ENCODE measurements at regions of chr3 and their contacts with region 1.

Region 1: GRCh38 chr3:46923559-46924350 is 46.2 kb downstream of the PTH1R start:
- DNase-seq: peak in 4 of 5 donors; percentile 13 to 60 (median 34)
- H3K4me3 ChIP-seq: no peak overlapping the region
- H3K4me3 Mint-ChIP-seq: no peak overlapping the region
- H3K27ac ChIP-seq: no peak overlapping the region
- H3K27ac Mint-ChIP-seq: peak overlapping the region in 6 of 8 donors; percentile 17 to 86 (median 60)
- H3K4me1 ChIP-seq: peaks cover 36% of the 10 kb centered on the region
- H3K4me1 Mint-ChIP-seq: peaks cover 33 to 48% (median 36%) of the 10 kb centered on the region in 3 donors
- H3K27me3 ChIP-seq: no peaks in the 10 kb centered on the region
- H3K27me3 Mint-ChIP-seq: no peaks in the 10 kb centered on the region

Region 2: DNA sequence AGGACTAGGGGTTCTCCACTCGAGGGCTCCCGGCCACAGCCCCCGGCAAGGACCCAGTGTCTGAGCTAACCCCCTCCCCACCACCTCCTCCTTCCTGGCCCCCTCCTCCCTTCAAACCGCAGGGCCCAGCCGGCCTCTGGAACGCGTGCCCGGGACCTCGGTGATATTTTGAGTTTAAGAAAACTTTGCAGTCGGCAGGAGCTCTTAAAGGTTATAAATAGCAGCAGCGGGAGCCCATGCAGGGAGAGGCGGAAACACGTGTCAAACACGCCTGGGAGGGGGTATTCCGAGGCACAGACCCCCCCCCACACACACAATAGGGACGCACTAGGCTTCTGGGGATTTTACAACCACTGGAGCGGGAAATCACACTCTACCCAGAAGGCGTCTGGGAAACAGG is 49.3 kb before region 1 on chr3:
- CTCF ChIA-PET with region 1: no interaction called
- POLR2A ChIA-PET with region 1: no interaction called
- DNase-seq: no peak
- H3K4me3 ChIP-seq: no peak overlapping the region
- H3K4me3 Mint-ChIP-seq: no peak overlapping the region
- H3K27ac ChIP-seq: no peak overlapping the region
- H3K27ac Mint-ChIP-seq: no peak overlapping the region
- H3K4me1 ChIP-seq: no peaks in the 10 kb centered on the region
- H3K4me1 Mint-ChIP-seq: no peaks in the 10 kb centered on the region
- H3K27me3 ChIP-seq: no peaks in the 10 kb centered on the region
- H3K27me3 Mint-ChIP-seq: peaks cover 6 to 28% of the 10 kb centered on the region in 2 donors

Region 3: DNA sequence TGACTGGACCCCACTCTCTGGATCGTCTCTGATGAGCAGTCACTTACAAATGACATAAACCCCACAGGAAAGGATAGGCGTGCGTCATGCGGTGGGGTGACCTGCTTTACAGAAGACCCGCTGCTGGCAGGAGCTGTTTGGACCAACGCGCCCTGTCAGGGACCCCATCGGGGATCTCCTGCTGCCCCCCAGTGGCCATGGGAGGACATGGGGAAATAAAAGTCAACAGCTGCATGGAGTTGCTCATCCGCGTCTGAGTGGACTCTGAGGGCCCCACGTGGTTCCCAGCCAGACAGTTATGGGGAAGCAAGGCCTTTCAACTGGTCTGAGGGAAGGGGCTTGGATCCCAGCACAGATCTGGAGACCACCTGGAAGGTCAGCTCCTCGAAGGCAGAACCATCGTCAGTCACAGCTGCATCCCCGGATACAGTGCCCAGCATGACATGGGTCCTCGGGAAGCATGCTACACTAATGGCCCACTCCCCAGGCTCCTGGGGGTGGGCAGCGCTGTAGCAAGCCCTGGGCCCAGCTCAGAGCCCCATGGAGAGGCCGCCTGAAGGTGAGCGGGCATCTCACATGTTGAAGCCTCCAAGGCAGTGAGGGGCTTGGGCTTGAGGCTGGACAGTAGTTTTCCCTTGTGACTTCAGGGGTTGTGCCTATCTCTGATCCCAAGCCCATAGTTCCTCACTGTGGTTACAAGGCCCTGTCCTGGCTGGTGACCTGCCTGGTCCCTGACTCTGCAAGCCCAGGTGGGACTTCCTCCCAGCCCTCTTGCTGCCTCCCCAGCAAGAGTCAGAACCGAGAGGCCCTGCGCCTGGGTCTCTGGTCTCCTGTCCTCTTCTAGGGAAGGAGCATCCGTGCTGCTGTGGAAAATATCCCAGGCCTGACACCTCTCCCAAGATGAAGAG is 14.0 kb before region 1 on chr3:
- CTCF ChIA-PET with region 1: interaction called, 17 read pairs
- POLR2A ChIA-PET with region 1: no interaction called
- DNase-seq: peak; percentile 64 to 82 (median 68)
- H3K4me3 ChIP-seq: no peak overlapping the region
- H3K4me3 Mint-ChIP-seq: peak overlapping the region in 4 of 7 donors; percentile 21 to 71 (median 30)
- H3K27ac ChIP-seq: no peak overlapping the region
- H3K27ac Mint-ChIP-seq: peak overlapping the region in 4 of 8 donors; percentile 57 to 93 (median 74)
- H3K4me1 ChIP-seq: peaks cover 6% of the 10 kb centered on the region
- H3K4me1 Mint-ChIP-seq: peaks cover 19 to 21% (median 20%) of the 10 kb centered on the region in 3 donors
- H3K27me3 ChIP-seq: no peaks in the 10 kb centered on the region
- H3K27me3 Mint-ChIP-seq: peaks cover 0 to 2% of the 10 kb centered on the region in 2 donors

Region 4: DNA sequence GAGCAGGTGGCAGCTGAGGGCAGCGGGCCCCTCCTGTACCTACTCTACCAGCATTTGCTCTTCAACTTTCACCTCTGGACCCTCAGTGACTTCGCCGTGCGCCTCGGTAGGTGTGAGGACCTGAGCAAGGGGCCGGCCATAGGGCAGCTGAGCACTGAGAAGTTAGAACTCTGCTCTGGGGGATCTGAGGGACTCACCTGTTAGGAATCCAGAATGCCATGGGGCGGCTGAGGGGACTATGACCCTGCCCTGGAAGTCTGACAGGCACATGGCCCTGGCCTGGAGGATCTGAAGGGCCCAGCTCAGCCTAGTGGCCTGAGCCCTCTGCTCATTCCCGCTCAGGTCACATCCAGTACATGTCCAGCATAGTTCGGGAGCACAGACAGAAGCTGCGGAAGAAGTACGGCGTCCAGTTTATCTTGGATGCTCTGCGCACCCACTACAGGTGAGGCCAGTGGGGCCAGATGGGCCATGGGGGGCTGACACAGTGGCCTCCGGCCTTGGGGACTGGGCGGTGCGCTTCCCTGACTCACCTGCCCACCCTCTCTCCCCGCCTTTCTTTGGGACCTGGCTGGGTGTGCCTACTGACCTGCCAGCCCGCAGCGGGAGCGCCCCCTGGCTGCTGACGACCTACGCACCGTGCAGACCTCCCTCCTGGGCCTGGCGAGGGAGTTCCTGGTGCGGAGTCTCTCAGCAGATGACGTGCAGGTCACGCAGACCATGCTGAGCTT is 74.5 kb after region 1 on chr3:
- CTCF ChIA-PET with region 1: interaction called, 15 read pairs
- POLR2A ChIA-PET with region 1: no interaction called
- DNase-seq: peak; percentile 50 to 80 (median 62)
- H3K4me3 ChIP-seq: no peak overlapping the region
- H3K4me3 Mint-ChIP-seq: no peak overlapping the region
- H3K27ac ChIP-seq: no peak overlapping the region
- H3K27ac Mint-ChIP-seq: peak overlapping the region in 6 of 8 donors; percentile 1 to 86 (median 76)
- H3K4me1 ChIP-seq: peaks cover 6% of the 10 kb centered on the region
- H3K4me1 Mint-ChIP-seq: peaks cover 17 to 35% (median 18%) of the 10 kb centered on the region in 3 donors
- H3K27me3 ChIP-seq: no peaks in the 10 kb centered on the region
- H3K27me3 Mint-ChIP-seq: no peaks in the 10 kb centered on the region

Region 5: GRCh38 chr3:47082519-47082918 is 158.8 kb after region 1 on chr3:
- CTCF ChIA-PET with region 1: no interaction called
- POLR2A ChIA-PET with region 1: no interaction called
- DNase-seq: no peak
- H3K4me3 ChIP-seq: no peak overlapping the region
- H3K4me3 Mint-ChIP-seq: no peak overlapping the region
- H3K27ac ChIP-seq: no peak overlapping the region
- H3K27ac Mint-ChIP-seq: peak overlapping the region in 6 of 8 donors; percentile 30 to 75 (median 45)
- H3K4me1 ChIP-seq: no peaks in the 10 kb centered on the region
- H3K4me1 Mint-ChIP-seq: peaks cover 21 to 31% (median 27%) of the 10 kb centered on the region in 3 donors
- H3K27me3 ChIP-seq: no peaks in the 10 kb centered on the region
- H3K27me3 Mint-ChIP-seq: peaks cover 0 to 2% of the 10 kb centered on the region in 2 donors

Measured in CD8-positive, alpha-beta memory T cell (primary cell).